CD4-positive, alpha-beta T cell (primary cell): ENCODE measurements at regions of chr9 and their contacts with region 1.

Region 1: GRCh38 chr9:131253891-131254491 is 22.3 kb downstream of the FAM78A start:
- DNase-seq: peak in 3 of 14 experiments; percentile 31 to 57 (median 42)
- ATAC-seq: no peak
- H3K4me3 ChIP-seq: no peak overlapping the region
- H3K4me3 Mint-ChIP-seq: peak overlapping the region; percentile 85
- H3K27ac ChIP-seq: peak overlapping the region; percentile 9 to 52
- H3K27ac Mint-ChIP-seq: peak overlapping the region; percentile 98
- H3K4me1 ChIP-seq: peaks cover 84% of the 10 kb centered on the region
- H3K4me1 Mint-ChIP-seq: peaks cover 53% of the 10 kb centered on the region
- H3K27me3 ChIP-seq: no peaks in the 10 kb centered on the region
- H3K27me3 Mint-ChIP-seq: no peaks in the 10 kb centered on the region
- CTCF ChIP-seq: no peak

Region 2: DNA sequence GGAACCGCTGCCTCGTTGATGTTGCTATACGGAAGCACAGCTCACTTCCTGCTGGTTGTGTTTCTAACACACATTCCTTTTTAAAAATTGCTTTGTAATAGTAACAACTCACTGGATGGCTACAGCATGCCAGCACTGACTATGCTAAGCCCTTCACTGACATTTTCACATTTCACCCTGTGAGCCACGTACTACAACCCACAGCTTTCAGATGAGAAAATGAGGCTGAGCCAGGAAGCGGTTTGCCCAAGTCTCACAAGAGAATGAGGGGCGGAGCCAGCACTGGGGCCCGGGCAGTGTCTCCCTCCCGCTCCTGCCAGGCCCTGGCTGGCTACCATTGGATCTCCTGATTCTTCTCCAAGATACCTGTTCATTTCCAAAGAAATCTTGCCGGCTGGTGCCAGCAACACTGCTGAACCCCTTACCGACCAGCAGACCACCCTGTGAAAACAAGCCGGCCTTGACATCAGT is 16.0 kb before region 1 on chr9:
- CTCF ChIA-PET with region 1: interaction called, 3 read pairs
- POLR2A ChIA-PET with region 1: interaction called, 130 read pairs
- intact Hi-C with region 1: loop called (anchors 1 to 2 kb)
- DNase-seq: peak; percentile 74 to 93 (median 82)
- ATAC-seq: peak; percentile 92
- H3K4me3 ChIP-seq: peak overlapping the region; percentile 43
- H3K4me3 Mint-ChIP-seq: peak overlapping the region; percentile 84
- H3K27ac ChIP-seq: peak overlapping the region; percentile 52 to 79
- H3K27ac Mint-ChIP-seq: peak overlapping the region; percentile 95
- H3K4me1 ChIP-seq: peaks cover 76% of the 10 kb centered on the region
- H3K4me1 Mint-ChIP-seq: peaks cover 52% of the 10 kb centered on the region
- H3K27me3 ChIP-seq: no peaks in the 10 kb centered on the region
- H3K27me3 Mint-ChIP-seq: no peaks in the 10 kb centered on the region
- CTCF ChIP-seq: no peak

Region 3: DNA sequence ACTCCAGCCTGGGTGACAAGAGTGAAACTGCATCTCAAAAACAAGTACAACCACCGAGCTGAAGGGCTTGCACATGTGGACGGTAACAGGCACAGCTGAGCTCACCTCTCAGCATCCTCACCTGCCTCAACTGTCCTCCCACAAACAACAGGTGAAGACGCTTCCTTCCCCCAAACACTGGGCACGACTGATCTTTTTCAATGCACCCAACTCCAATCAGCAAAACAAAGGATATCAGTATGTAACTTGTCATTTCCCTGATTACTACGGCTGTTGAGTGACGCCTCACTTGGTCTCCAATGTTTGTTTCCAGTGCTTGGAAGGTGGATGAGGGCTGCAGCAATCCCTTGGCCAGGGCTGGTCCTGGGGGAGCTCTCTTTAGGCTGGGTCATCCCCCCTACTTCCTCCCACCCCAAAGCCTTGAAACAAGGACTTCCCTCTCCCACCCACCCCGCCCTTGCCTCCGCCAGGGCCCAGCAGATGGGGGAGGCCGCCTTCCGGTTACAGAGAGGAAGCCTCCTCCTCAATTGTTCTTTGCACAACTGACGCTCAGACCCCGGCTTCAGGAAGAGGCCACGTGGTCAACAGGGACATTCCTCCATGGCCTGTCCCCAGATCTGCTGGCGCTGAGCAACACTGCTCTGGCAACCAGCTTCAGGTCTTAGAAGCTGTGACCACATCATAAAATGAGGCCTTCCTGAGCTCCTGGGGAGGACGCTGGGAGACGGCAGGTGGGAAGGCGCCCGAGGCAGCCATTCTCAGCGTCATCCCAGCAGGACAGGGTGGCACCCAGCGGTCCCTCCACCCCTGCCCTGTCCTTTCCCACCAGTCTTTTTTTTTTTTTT is 16.4 kb after region 1 on chr9:
- CTCF ChIA-PET with region 1: interaction called, 18 read pairs
- POLR2A ChIA-PET with region 1: interaction called, 738 read pairs
- intact Hi-C with region 1: loop called in 1 of 2 experiments (anchors 1 kb)
- DNase-seq: peak in 9 of 14 experiments; percentile 44 to 80 (median 59)
- ATAC-seq: peak; percentile 11
- H3K4me3 ChIP-seq: peak overlapping the region; percentile 99
- H3K4me3 Mint-ChIP-seq: peak overlapping the region; percentile 97
- H3K27ac ChIP-seq: peak overlapping the region; percentile 83 to 94
- H3K27ac Mint-ChIP-seq: peak overlapping the region; percentile 100
- H3K4me1 ChIP-seq: peaks cover 74% of the 10 kb centered on the region
- H3K4me1 Mint-ChIP-seq: peaks cover 60% of the 10 kb centered on the region
- H3K27me3 ChIP-seq: no peaks in the 10 kb centered on the region
- H3K27me3 Mint-ChIP-seq: no peaks in the 10 kb centered on the region
- CTCF ChIP-seq: no peak

Region 4: GRCh38 chr9:131310833-131311554 is 57.0 kb after region 1 on chr9:
- CTCF ChIA-PET with region 1: no interaction called
- POLR2A ChIA-PET with region 1: interaction called, 9 read pairs
- intact Hi-C with region 1: loop called in 1 of 2 experiments (anchors 2 kb)
- DNase-seq: peak; percentile 36 to 88 (median 60)
- ATAC-seq: peak; percentile 98
- H3K4me3 ChIP-seq: peak overlapping the region; percentile 40
- H3K4me3 Mint-ChIP-seq: peak overlapping the region; percentile 54
- H3K27ac ChIP-seq: no peak overlapping the region
- H3K27ac Mint-ChIP-seq: peak overlapping the region; percentile 73
- H3K4me1 ChIP-seq: peaks cover 15% of the 10 kb centered on the region
- H3K4me1 Mint-ChIP-seq: peaks cover 16% of the 10 kb centered on the region
- H3K27me3 ChIP-seq: no peaks in the 10 kb centered on the region
- H3K27me3 Mint-ChIP-seq: no peaks in the 10 kb centered on the region
- CTCF ChIP-seq: no peak

Region 5: DNA sequence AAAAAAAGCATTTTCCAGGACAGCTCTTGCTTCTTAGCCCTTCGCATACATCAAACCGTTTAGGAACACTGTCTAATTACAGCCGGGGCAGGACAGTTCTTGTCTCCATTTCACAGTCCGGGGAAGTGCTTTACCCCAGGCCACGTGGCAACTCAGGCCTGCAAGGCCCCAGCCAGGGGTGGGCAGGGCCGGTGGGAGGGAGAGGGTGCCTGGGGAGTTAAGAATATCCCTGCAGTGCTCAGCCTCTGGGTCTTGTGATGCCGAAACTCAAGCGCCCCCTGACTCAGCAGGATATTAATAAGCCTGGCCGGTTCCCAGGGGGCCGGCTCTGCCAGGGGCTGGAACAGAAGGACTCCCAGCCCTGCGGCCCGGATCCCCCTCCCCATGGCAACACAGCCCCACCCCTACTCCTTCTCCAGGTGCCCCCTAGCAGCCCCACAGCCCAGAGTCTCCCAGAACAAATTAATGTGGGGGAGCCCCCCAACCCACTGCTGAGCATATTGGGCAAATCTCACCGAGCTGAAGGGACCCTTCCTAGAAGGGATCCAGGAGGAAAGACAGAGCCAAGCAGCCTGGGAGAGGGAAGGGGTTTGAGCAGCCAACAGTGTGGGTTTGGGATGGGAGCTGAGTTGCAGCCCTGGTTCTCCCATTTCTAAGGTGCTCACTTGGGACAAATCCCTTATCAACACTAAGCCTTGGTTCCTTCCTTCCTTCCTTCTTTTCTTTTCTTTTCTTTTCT is 80.8 kb after region 1 on chr9:
- CTCF ChIA-PET with region 1: interaction called, 6 read pairs
- POLR2A ChIA-PET with region 1: interaction called, 4 read pairs
- intact Hi-C with region 1: loop called in 1 of 2 experiments (anchors 5 kb)
- DNase-seq: no peak
- ATAC-seq: no peak
- H3K4me3 ChIP-seq: no peak overlapping the region
- H3K4me3 Mint-ChIP-seq: no peak overlapping the region
- H3K27ac ChIP-seq: no peak overlapping the region
- H3K27ac Mint-ChIP-seq: no peak overlapping the region
- H3K4me1 ChIP-seq: peaks cover 7% of the 10 kb centered on the region
- H3K4me1 Mint-ChIP-seq: peaks cover 4% of the 10 kb centered on the region
- H3K27me3 ChIP-seq: no peaks in the 10 kb centered on the region
- H3K27me3 Mint-ChIP-seq: no peaks in the 10 kb centered on the region
- CTCF ChIP-seq: no peak